ENCODE measurements at regions of chr12 and their contacts with region 1.

Region 1: DNA sequence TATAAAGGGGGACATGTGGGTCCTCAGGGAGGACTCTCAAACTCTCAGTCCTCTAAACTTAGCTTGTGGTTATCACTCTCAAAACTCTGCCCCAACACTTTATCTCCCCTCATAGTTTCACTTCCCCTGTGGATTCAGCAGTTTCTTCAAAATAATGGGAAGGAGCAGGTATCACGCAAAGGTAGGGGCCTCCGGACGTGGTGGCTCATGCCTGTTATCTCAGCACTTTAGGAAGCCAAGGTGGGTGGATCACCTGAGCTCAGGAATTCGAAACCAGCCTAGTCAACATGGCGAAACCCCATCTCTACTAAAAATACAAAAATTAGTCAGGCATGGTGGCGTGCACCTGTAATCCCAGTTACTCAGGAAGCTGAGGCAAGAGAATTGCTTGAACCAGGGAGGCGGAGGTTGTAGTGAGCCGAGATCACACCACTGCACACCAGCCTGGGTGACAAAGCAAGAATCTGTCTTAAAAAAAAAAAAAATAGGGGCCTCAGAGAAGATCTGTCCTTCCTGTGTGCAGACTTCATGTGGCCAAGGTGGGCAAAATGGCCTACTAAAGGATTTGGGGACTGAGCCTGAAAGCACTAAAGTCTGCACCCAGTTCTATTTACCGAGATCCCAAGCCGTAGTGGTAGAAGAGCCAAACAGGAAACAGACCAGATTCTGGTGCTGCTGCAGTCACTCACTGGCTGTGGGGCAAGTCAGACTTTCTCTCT is 6.4 kb downstream of the ITGB7 start:
- DNase-seq: peak; percentile 55
- H3K4me3 Mint-ChIP-seq: peak overlapping the region; percentile 48
- H3K27ac Mint-ChIP-seq: peak overlapping the region; percentile 89
- H3K4me1 Mint-ChIP-seq: peaks cover 88% of the 10 kb centered on the region
- H3K27me3 Mint-ChIP-seq: no peaks in the 10 kb centered on the region

Region 2: GRCh38 chr12:53190108-53190729 is 10.4 kb before region 1 on chr12:
- CTCF ChIA-PET with region 1: interaction called, 15 read pairs
- DNase-seq: peak; percentile 62
- H3K4me3 Mint-ChIP-seq: no peak overlapping the region
- H3K27ac Mint-ChIP-seq: peak overlapping the region; percentile 19
- H3K4me1 Mint-ChIP-seq: peaks cover 27% of the 10 kb centered on the region
- H3K27me3 Mint-ChIP-seq: no peaks in the 10 kb centered on the region